Activated CD4-positive, alpha-beta memory T cell treated with anti-CD3 and anti-CD28 coated beads for 36 hours (primary cell): ENCODE measurements at regions of chr17 and their contacts with region 1.

Region 1: GRCh38 chr17:59440784-59441441 is 109.5 kb downstream of the YPEL2 start:
- DNase-seq: peak; percentile 92
- H3K4me3 Mint-ChIP-seq: peak overlapping the region; percentile 59
- H3K27ac Mint-ChIP-seq: peak overlapping the region; percentile 91
- H3K4me1 Mint-ChIP-seq: peaks cover 54% of the 10 kb centered on the region
- H3K27me3 Mint-ChIP-seq: no peaks in the 10 kb centered on the region

Region 2: GRCh38 chr17:59220376-59221158 is 220.3 kb before region 1 on chr17 and contains the start of gene GDPD1:
- CTCF ChIA-PET with region 1: interaction called, 3 read pairs
- POLR2A ChIA-PET with region 1: no interaction called
- intact Hi-C with region 1: loop called (anchors 2 kb)
- DNase-seq: peak; percentile 98
- H3K4me3 Mint-ChIP-seq: peak within 1 kb of the TSS; percentile 100
- H3K27ac Mint-ChIP-seq: peak within 1 kb of the TSS; percentile 80
- H3K4me1 Mint-ChIP-seq: peaks cover 13% of the 10 kb centered on the region
- H3K27me3 Mint-ChIP-seq: no peaks in the 10 kb centered on the region
- total RNA-seq, gene GDPD1: 2.9 to 3.5 TPM

Region 3: GRCh38 chr17:59277031-59277430 is 163.9 kb before region 1 on chr17:
- CTCF ChIA-PET with region 1: no interaction called
- POLR2A ChIA-PET with region 1: no interaction called
- intact Hi-C with region 1: no loop called
- DNase-seq: no peak
- H3K4me3 Mint-ChIP-seq: no peak overlapping the region
- H3K27ac Mint-ChIP-seq: no peak overlapping the region
- H3K4me1 Mint-ChIP-seq: peaks cover 3% of the 10 kb centered on the region
- H3K27me3 Mint-ChIP-seq: no peaks in the 10 kb centered on the region

Region 4: GRCh38 chr17:59311130-59311920 is 129.6 kb before region 1 on chr17:
- CTCF ChIA-PET with region 1: interaction called, 241 read pairs
- POLR2A ChIA-PET with region 1: interaction called, 3 read pairs
- intact Hi-C with region 1: loop called (anchors 1 kb)
- DNase-seq: peak; percentile 39
- H3K4me3 Mint-ChIP-seq: no peak overlapping the region
- H3K27ac Mint-ChIP-seq: peak overlapping the region; percentile 5
- H3K4me1 Mint-ChIP-seq: peaks cover 3% of the 10 kb centered on the region
- H3K27me3 Mint-ChIP-seq: no peaks in the 10 kb centered on the region

Region 5: GRCh38 chr17:59427425-59427921 is 13.4 kb before region 1 on chr17:
- CTCF ChIA-PET with region 1: interaction called, 95 read pairs
- POLR2A ChIA-PET with region 1: interaction called, 13 read pairs
- intact Hi-C with region 1: loop called (anchors 1 kb)
- DNase-seq: peak; percentile 82
- H3K4me3 Mint-ChIP-seq: no peak overlapping the region
- H3K27ac Mint-ChIP-seq: no peak overlapping the region
- H3K4me1 Mint-ChIP-seq: peaks cover 33% of the 10 kb centered on the region
- H3K27me3 Mint-ChIP-seq: peaks cover under 1% of the 10 kb centered on the region